GM18951 (cell line): ENCODE measurements at regions of chr2 and their contacts with region 1.

Region 1: GRCh38 chr2:191165176-191165643 is 14.4 kb upstream of the STAT4 start:
- POLR2A ChIP-seq: no peak

Region 2: GRCh38 chr2:190365499-190366204 is 799.6 kb before region 1 on chr2:
- in situ Hi-C with region 1: no loop called
- POLR2A ChIP-seq: no peak

Region 3: DNA sequence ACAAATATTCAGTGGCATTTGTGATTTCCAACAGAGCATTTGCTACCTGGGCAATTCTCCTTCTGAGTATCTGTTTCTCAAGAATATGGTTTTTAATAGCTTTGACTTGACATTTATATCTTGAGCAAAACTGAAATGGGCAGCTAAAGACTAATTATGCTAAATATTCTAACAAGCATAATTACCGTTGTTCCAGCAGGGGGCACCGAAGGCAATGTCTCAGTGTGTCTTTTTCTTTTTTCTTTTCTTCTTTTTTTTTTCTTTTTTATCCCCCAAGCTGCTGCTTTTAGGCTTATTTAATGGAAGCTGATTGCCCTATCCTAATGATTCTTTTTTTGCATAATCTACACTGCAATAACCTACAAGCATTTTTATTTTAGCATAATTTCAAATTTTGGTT is 373.9 kb after region 1 on chr2:
- in situ Hi-C with region 1: loop called (anchors 10 kb)
- POLR2A ChIP-seq: no peak